GM10248 (cell line): ENCODE measurements at regions of chr11 and their contacts with region 1.

Region 1: GRCh38 chr11:43567396-43567975 is 113.1 kb upstream of the HSD17B12 start:
- DNase-seq: peak; percentile 67
- CTCF ChIP-seq: peak; percentile 67

Region 2: GRCh38 chr11:43289368-43289767 is 278.1 kb before region 1 on chr11:
- CTCF ChIA-PET with region 1: no interaction called
- POLR2A ChIA-PET with region 1: no interaction called
- DNase-seq: no peak
- CTCF ChIP-seq: no peak

Region 3: GRCh38 chr11:43579171-43579918 is 11.9 kb after region 1 on chr11:
- CTCF ChIA-PET with region 1: interaction called, 133 read pairs
- POLR2A ChIA-PET with region 1: no interaction called
- DNase-seq: peak; percentile 64
- CTCF ChIP-seq: peak; percentile 45